Tibial artery (tissue), 4 donors: ENCODE measurements at regions of chr1 and their contacts with region 1.

Region 1: GRCh38 chr1:211323156-211324063 is 3.2 kb upstream of the TRAF5 start:
- DNase-seq: peak in 1 of 2 donors; percentile 57
- H3K4me3 ChIP-seq: no peak overlapping the region
- H3K27ac ChIP-seq: no peak overlapping the region
- H3K4me1 ChIP-seq: peaks cover 0 to 19% (median 8%) of the 10 kb centered on the region in 4 donors
- H3K27me3 ChIP-seq: no peaks in the 10 kb centered on the region
- CTCF ChIP-seq: peak; percentile 64 to 67

Region 2: GRCh38 chr1:211469938-211470529 is 146.6 kb after region 1 on chr1:
- intact Hi-C with region 1: loop called (anchors 5 kb)
- DNase-seq: peak; percentile 82 to 84
- H3K4me3 ChIP-seq: no peak overlapping the region
- H3K27ac ChIP-seq: no peak overlapping the region
- H3K4me1 ChIP-seq: peaks cover 0 to 10% (median 6%) of the 10 kb centered on the region in 4 donors
- H3K27me3 ChIP-seq: no peaks in the 10 kb centered on the region
- CTCF ChIP-seq: peak; percentile 79 to 87

Region 3: DNA sequence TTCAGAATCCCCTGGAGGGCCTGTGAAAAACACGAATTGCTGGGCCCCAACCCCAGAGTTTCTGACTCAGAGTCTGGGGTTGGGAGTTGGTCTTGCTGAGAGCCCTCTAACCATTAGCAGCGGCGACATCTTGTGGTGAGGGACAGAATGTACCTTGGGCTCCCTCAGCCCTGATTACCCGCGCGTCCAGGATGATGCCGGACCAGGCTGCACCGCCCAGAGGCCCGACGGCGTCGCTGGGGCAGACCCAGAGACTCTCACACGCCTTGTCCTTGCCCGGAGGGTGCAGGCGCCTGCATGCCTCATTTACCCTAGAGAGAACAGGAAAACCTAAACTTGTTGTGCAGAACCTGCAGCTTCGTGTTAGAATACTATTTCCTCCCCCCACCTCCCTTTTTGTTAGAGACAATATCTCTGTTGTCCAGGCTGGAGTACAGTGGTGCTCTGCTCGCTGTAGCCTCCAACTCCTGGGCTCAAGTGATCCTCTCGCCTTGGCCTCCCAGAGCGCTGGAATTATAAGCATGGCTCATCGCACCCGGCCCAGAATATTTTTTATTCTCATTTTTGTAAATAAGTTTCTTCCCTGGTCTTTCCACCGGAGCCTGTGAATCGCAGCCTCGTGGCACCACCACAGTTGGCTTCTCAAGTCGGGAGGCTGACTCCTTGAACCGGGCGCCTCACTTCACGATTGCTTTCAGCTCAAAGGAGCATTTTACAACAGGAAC is 190.8 kb after region 1 on chr1:
- intact Hi-C with region 1: loop called (anchors 5 kb)
- DNase-seq: peak; percentile 80 to 88
- H3K4me3 ChIP-seq: no peak overlapping the region
- H3K27ac ChIP-seq: peak overlapping the region in 1 of 2 donors; percentile 36
- H3K4me1 ChIP-seq: peaks cover 0 to 16% (median 9%) of the 10 kb centered on the region in 4 donors
- H3K27me3 ChIP-seq: no peaks in the 10 kb centered on the region
- CTCF ChIP-seq: peak; percentile 72 to 76

Region 4: GRCh38 chr1:211654838-211655787 is 331.7 kb after region 1 on chr1:
- intact Hi-C with region 1: loop called (anchors 10 kb)
- DNase-seq: peak; percentile 88 to 93
- H3K4me3 ChIP-seq: no peak overlapping the region
- H3K27ac ChIP-seq: no peak overlapping the region
- H3K4me1 ChIP-seq: peaks cover 0 to 6% (median 3%) of the 10 kb centered on the region in 4 donors
- H3K27me3 ChIP-seq: no peaks in the 10 kb centered on the region
- CTCF ChIP-seq: peak; percentile 90 to 95